ENCODE measurements at regions of chr19 and their contacts with region 1.

Region 1: GRCh38 chr19:49546825-49547565 is 19.2 kb downstream of the RCN3 start:
- DNase-seq: peak; percentile 84
- H3K4me3 ChIP-seq: no peak overlapping the region
- H3K27ac ChIP-seq: no peak overlapping the region
- H3K4me1 ChIP-seq: peaks cover 5% of the 10 kb centered on the region
- CTCF ChIP-seq: peak; percentile 99

Region 2: GRCh38 chr19:49422407-49423070 is 124.5 kb before region 1 on chr19:
- CTCF ChIA-PET with region 1: no interaction called
- POLR2A ChIA-PET with region 1: no interaction called
- intact Hi-C with region 1: no loop called
- DNase-seq: no peak
- H3K4me3 ChIP-seq: no peak overlapping the region
- H3K27ac ChIP-seq: no peak overlapping the region
- H3K4me1 ChIP-seq: peaks cover 63% of the 10 kb centered on the region
- CTCF ChIP-seq: peak; percentile 55; the same call in 1 of the 2 replicates

Region 3: DNA sequence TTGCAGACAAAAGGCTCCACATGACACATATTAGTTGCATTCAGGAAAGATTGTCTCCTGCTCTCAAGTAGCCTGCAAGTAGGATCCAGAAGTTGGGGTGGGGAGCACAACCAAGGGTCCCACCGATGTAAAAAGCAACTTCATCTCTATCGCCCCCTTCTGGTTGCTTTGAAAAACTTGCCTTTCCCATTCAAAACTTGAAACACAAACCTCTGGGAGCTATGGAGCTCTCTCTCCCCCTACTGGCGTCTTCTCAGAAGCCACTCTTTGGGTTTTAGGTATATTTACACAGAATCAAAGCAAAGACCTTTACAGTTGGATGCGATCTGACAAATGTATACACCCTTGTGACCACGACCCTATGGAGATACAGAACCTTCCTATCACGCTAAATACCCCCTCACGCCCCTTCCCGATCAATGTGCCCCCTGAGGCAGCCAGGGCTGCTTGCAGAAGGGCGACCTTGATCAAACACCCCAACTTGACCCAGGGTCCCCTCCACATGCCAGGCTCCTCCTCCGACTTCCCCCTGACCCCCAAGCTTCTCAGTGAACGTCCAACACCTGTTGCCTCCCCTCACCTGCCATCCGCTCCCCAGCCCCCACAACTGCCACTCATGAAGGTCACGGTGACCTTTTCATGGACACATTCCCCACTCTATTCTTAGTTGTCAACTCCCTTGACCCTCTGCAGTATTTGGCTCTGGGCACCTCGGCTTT is 23.3 kb after region 1 on chr19:
- CTCF ChIA-PET with region 1: interaction called, 8 read pairs
- POLR2A ChIA-PET with region 1: no interaction called
- intact Hi-C with region 1: loop called (anchors 2 kb)
- DNase-seq: peak; percentile 92
- H3K4me3 ChIP-seq: peak overlapping the region; percentile 12
- H3K27ac ChIP-seq: peak overlapping the region; percentile 45
- H3K4me1 ChIP-seq: peaks cover 22% of the 10 kb centered on the region
- CTCF ChIP-seq: peak; percentile 99

Measured in OCI-LY7 (cell line).